Heart left ventricle (tissue), 16 donors: ENCODE measurements at regions of chr17 and their contacts with region 1.

Region 1: DNA sequence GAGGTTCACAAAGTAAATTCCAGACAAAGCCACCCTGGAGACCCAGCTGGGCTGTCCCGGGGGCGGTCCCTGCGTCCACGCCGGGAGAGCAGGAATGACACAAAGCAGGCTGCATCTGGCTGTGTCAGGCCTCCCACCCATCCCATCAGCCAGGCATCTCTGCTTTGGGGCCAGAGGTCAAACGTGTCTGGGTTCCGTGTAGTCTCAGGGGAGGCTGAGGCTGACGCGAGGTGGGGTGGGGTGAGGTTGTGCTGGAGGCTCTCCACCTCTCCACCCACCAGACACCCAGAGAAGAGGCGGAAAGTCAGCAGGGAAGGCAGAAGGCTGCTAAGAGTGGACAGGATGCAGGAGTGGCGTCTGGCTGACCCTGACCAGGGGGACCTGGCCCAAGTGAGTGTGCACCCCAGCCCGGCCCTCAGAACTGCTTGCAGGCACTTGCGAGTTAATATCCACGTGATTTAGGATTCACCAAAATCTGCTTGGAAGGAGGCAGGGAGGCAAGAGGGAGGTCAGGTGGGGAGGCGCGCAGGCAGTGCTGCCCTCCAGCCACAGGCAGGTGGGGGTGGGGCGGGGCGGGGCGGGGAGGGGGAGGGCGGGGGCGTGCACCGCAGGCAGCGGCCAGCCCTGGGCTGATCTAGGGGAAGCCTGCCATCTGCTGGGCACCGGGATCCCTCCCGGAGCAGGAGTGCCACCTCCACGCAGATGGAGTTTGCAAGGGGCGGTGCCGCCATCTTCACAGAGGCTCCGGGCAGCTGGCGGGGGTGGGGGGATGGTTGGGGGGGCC is 44.3 kb downstream of the TBC1D16 start:
- DNase-seq: peak; percentile 82 to 91 (median 88)
- ATAC-seq: peak; percentile 82 to 87 (median 86)
- H3K4me3 ChIP-seq: peak overlapping the region in 11 of 12 donors; percentile 14 to 57 (median 47)
- H3K27ac ChIP-seq: peak overlapping the region in 10 of 12 donors; percentile 55 to 83 (median 76)
- H3K4me1 ChIP-seq: peaks cover 0 to 60% (median 38%) of the 10 kb centered on the region in 12 donors
- H3K27me3 ChIP-seq: no peaks in the 10 kb centered on the region
- CTCF ChIP-seq: peak; percentile 46 to 76 (median 61)
- POLR2A ChIP-seq: no peak

Region 2: DNA sequence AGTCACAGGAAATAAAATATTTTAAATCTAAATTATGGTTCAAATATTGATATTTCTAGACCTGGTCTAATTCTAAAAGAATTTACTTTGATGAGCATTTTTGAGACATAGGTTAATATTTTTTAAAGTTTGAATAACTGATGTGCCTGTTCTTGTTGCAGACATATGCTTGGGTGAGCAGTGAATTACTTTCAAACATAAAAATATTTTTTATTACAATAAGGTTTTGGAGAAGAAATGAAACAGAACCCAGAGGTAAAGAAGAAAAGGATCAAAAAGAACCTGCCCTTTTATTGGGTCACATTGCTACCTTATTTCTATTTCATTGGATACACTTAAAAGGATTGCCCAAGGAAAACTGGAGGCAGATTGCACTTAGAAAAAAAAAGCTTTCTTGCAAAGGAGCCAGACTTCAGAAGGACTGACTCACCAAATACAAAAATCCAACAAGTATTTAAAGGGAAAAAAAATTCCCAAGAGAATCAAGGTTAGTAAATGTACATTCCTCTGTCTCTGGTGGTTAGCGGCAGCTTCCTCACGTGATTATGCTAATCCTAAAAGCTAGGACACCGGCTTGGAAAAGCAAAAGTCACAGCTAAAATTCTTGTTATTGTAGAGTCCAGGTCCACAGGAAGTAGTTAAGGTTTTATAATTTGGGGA is 242.0 kb before region 1 on chr17:
- intact Hi-C with region 1: loop called in 7 of 10 experiments (anchors 2 to 10 kb)
- DNase-seq: no peak
- ATAC-seq: no peak
- H3K4me3 ChIP-seq: no peak overlapping the region
- H3K27ac ChIP-seq: no peak overlapping the region
- H3K4me1 ChIP-seq: peaks cover 0 to 21% (median 5%) of the 10 kb centered on the region in 12 donors
- H3K27me3 ChIP-seq: peaks cover 27 to 88% (median 72%) of the 10 kb centered on the region in 9 donors
- CTCF ChIP-seq: no peak
- POLR2A ChIP-seq: no peak

Region 3: GRCh38 chr17:79796763-79797491 is 194.4 kb before region 1 on chr17 and contains the start of gene CBX8:
- intact Hi-C with region 1: loop called in 5 of 10 experiments (anchors 5 kb)
- DNase-seq: peak; percentile 100
- ATAC-seq: peak; percentile 93 to 99 (median 97)
- H3K4me3 ChIP-seq: peak within 1 kb of the TSS; percentile 56 to 95 (median 74)
- H3K27ac ChIP-seq: peak within 1 kb of the TSS; percentile 49 to 92 (median 86)
- H3K4me1 ChIP-seq: peaks cover 3 to 67% (median 50%) of the 10 kb centered on the region in 12 donors
- H3K27me3 ChIP-seq: peaks cover 50 to 67% (median 61%) of the 10 kb centered on the region in 9 donors
- CTCF ChIP-seq: peak in 10 of 12 donors; percentile 8 to 51 (median 27)
- POLR2A ChIP-seq: peak in 1 of 2 donors; percentile 54
- total RNA-seq, gene CBX8: 1.5 to 9.2 (median 5.3) TPM

Region 4: GRCh38 chr17:79810130-79811010 is 181.0 kb before region 1 on chr17:
- intact Hi-C with region 1: loop called in 3 of 10 experiments (anchors 2 to 5 kb)
- DNase-seq: peak; percentile 71 to 88 (median 80)
- ATAC-seq: peak; percentile 57 to 85 (median 82)
- H3K4me3 ChIP-seq: peak overlapping the region in 10 of 12 donors; percentile 6 to 46 (median 30)
- H3K27ac ChIP-seq: no peak overlapping the region
- H3K4me1 ChIP-seq: peaks cover 4 to 60% (median 33%) of the 10 kb centered on the region in 12 donors
- H3K27me3 ChIP-seq: peaks cover 73 to 94% (median 91%) of the 10 kb centered on the region in 9 donors
- CTCF ChIP-seq: no peak
- POLR2A ChIP-seq: no peak

Region 5: DNA sequence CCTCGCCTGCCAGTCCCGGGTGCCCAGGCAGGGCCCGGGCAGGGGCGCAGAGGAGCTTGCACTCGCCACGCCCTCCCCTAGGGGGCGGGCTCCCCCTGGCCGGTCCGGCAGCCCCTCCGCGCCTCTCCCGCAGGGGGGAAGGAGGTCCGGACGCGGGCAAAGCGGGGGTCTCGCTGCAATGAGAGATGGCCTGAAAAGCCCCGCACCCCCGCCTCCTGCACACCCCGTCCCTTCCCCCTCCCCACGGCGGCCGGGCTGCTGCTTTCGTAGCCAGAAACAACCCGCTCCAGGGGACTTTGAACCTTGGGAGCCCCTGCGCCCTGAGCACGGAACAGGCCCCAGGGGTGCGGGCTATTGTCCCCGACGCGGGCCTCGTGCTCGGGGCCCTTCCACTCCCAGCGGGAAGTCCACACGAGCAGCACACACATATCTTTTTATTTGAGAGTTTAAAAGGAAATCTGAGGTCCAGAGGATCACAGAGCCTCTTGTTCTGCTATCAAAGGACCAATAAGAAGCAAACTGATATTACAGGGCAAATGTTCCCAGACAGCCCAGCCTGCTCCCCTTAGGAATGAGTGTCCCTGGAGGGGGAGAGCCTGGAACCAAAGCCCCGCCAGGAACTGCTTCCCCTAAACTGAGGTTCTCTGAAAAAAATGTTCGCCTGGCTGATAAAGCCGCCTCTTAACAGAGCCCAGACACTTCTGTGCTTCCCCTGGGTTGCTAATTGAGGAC is 146.3 kb before region 1 on chr17:
- intact Hi-C with region 1: loop called in 4 of 10 experiments (anchors 2 to 10 kb)
- DNase-seq: peak in 4 of 5 donors; percentile 62 to 84 (median 65)
- ATAC-seq: peak; percentile 38 to 80 (median 70)
- H3K4me3 ChIP-seq: peak overlapping the region; percentile 43 to 79 (median 65)
- H3K27ac ChIP-seq: peak overlapping the region in 10 of 12 donors; percentile 50 to 86 (median 68)
- H3K4me1 ChIP-seq: peaks cover 0 to 61% (median 50%) of the 10 kb centered on the region in 12 donors
- H3K27me3 ChIP-seq: peaks cover 27 to 55% (median 34%) of the 10 kb centered on the region in 9 donors
- CTCF ChIP-seq: peak; percentile 72 to 89 (median 80)
- POLR2A ChIP-seq: no peak

Region 6: DNA sequence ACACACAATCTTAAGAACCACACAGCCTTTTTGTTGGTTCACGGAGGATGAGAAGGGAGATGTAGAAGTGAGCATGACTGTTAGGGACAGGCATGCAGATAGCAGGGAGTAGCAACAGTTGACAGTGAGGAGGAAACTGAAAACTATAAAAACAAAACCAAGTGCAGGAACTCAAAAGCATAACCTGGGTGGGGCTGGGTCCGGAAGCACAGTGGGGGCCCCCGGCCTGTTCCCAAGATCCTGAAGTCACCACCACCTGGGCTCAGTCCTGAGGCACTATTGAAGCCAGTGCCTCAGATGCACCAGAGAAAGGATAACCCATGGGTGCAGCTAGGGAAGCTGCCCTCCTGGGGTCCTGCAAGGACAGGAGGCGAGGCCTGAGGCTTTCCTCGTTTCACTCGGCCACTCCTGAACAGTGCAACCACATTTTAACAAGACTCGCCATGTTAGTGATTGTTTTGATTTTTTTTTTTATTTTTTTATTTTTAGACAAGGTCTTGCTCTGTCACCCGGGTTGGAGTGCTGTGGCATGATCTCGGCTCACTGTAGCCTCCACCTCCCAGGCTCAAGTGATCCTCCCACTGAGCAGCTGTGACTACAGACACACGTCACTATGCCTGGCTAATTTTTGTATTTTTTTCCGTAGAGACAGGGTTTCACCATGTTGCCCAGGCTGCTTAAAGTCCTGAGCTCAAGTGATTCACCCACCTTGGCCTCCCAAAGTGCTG is 124.4 kb before region 1 on chr17:
- intact Hi-C with region 1: loop called in 1 of 10 experiments (anchors 10 kb)
- DNase-seq: peak in 1 of 5 donors; percentile 20
- ATAC-seq: no peak
- H3K4me3 ChIP-seq: no peak overlapping the region
- H3K27ac ChIP-seq: no peak overlapping the region
- H3K4me1 ChIP-seq: peaks cover 0 to 6% (median 0%) of the 10 kb centered on the region in 12 donors
- H3K27me3 ChIP-seq: peaks cover 0 to 47% (median 9%) of the 10 kb centered on the region in 9 donors
- CTCF ChIP-seq: no peak
- POLR2A ChIP-seq: no peak